ENCODE measurements at regions of chr9 and their contacts with region 1.

Region 1: DNA sequence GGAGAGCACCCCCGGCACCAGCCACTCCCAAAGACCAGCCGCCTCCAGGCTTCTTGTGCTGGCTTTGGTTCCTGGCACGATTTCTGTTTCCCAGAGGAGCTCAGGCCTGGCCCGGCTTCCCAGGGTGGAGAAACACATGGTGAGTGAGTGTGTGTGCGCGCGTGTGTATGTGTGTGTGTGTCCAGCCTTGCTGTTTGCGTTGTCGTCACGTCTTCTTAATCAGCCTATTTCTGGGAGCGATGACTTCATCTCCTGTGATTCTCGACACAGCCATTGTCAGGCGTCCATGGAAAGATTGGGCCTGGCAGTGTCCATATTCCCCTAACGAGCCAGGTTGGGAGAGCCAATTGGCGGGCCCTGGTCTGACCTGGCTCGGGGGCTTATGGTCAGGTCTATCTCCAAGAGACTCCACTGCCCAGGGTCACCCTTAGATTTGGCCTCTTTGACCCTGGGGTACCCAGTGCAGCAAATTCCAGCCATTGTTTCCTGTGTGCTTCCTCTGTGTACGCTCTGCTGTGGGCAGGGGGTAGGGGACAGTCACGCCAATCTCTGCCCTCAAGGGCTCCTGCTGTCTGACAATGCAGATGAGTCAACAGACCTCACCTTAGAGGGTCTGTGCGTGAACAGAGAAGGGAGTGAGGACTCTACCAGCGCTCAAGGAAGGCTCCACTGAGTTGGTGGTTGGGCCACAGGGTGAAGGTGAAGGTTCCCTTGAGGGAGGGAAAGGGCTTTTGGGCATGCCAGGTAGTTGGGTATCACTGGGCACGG is 73.8 kb downstream of the DAB2IP start:
- DNase-seq: peak; percentile 95 to 99
- ATAC-seq: peak; percentile 86 to 92 (median 88)
- H3K4me3 ChIP-seq: no peak overlapping the region
- H3K27ac ChIP-seq: peak overlapping the region; percentile 67 to 98 (median 92)
- H3K4me1 ChIP-seq: peaks cover 70 to 100% (median 98%) of the 10 kb centered on the region in 9 donors
- H3K27me3 ChIP-seq: no peaks in the 10 kb centered on the region
- CTCF ChIP-seq: no peak

Region 2: GRCh38 chr9:121640076-121640475 is 85.1 kb before region 1 on chr9:
- intact Hi-C with region 1: loop called in 1 of 10 experiments (anchors 10 kb)
- DNase-seq: peak; percentile 70 to 73
- ATAC-seq: peak; percentile 52 to 84 (median 74)
- H3K4me3 ChIP-seq: no peak overlapping the region
- H3K27ac ChIP-seq: peak overlapping the region in 9 of 10 donors; percentile 32 to 79 (median 47)
- H3K4me1 ChIP-seq: peaks cover 16 to 90% (median 61%) of the 10 kb centered on the region in 9 donors
- H3K27me3 ChIP-seq: no peaks in the 10 kb centered on the region
- CTCF ChIP-seq: peak; percentile 53 to 76 (median 68)

Region 3: DNA sequence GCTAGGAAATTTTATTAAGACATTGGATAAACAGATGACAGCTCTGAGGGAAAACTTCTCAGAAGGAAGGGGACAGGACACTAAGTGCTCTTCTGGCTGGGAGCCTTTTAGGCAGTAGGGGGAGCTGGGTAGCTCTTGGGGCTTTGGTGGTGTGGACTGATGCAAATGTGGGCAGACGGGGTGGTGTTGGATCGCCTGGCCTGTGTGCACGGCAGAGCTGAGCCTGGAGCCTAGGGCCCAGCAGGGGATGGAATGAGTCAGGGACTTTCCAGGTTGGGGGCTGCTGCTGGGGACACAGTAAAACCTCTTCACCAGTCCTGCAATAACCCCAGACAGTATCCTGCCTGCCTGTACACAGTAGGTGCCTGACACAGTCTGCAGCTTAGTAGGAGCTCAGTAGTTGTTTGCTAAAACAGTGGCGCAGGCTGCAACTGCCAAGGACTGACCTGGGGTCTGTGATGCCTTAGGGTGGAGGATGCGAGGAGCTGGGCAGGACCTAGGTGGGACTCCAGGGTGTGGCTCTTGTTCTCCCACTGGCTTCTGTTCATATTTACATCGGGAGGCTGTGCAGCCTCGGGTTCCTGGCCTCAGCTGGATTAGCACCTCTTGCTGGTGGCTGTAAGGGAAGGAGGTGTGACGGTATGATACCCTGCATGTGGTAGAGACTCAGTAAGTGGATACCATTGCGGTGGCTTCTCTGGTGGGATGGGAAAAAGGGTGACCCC is 10.0 kb after region 1 on chr9:
- intact Hi-C with region 1: loop called in 1 of 10 experiments (anchors 1 kb)
- DNase-seq: no peak
- ATAC-seq: peak in 5 of 8 donors; percentile 7 to 35 (median 11)
- H3K4me3 ChIP-seq: peak overlapping the region in 9 of 10 donors; percentile 37 to 61 (median 56)
- H3K27ac ChIP-seq: peak overlapping the region; percentile 77 to 98 (median 89)
- H3K4me1 ChIP-seq: peaks cover 54 to 97% (median 83%) of the 10 kb centered on the region in 9 donors
- H3K27me3 ChIP-seq: peaks cover 0 to 16% (median 0%) of the 10 kb centered on the region in 7 donors
- CTCF ChIP-seq: peak in 7 of 9 donors; percentile 29 to 57 (median 46)

Region 4: GRCh38 chr9:121744002-121744686 is 19.0 kb after region 1 on chr9:
- intact Hi-C with region 1: loop called in 1 of 10 experiments (anchors 2 kb)
- DNase-seq: peak; percentile 67 to 75
- ATAC-seq: peak; percentile 43 to 83 (median 73)
- H3K4me3 ChIP-seq: peak overlapping the region; percentile 23 to 64 (median 52)
- H3K27ac ChIP-seq: peak overlapping the region; percentile 89 to 98 (median 94)
- H3K4me1 ChIP-seq: peaks cover 57 to 100% (median 90%) of the 10 kb centered on the region in 9 donors
- H3K27me3 ChIP-seq: no peaks in the 10 kb centered on the region
- CTCF ChIP-seq: peak; percentile 29 to 77 (median 54)

Region 5: DNA sequence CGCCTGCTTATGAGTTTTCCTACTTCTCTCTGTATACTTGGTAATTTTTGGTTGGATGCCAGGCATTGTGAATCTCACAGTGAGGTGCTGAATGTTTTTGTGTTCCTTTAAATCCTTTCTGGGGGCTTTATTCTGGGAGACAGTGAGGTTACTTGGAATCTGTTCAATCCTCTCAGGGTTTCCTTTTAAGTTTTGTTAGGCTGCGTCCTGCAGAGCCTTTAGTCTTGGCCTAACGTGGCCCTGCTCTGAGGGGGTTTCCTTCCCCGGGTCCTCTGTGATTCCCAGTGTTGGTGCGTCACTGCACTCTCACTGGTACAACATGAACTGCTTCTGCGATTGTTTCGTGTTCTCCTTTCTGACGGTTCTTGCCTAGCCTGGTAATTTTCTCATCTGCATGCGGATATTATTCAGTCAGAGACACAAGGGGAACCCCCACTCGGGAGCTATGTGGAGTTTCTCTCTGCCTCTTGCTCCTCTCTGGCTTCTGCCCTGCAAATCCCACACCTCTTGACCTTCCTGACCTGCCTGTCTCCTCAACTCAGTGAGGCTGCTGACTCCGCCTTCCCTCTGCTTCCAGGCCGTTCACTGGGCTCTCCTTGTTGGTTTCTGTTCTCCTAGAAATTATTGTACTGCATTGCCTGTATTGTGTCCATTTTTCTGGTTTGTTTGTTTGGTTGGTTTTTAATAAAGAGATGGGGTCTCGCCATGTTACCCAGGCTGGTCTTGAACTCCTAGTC is 54.4 kb after region 1 on chr9:
- intact Hi-C with region 1: loop called in 1 of 10 experiments (anchors 1 kb)
- DNase-seq: peak in 1 of 2 donors; percentile 54
- ATAC-seq: peak; percentile 25 to 88 (median 78)
- H3K4me3 ChIP-seq: no peak overlapping the region
- H3K27ac ChIP-seq: peak overlapping the region; percentile 14 to 79 (median 70)
- H3K4me1 ChIP-seq: peaks cover 2 to 68% (median 32%) of the 10 kb centered on the region in 9 donors
- H3K27me3 ChIP-seq: no peaks in the 10 kb centered on the region
- CTCF ChIP-seq: no peak

Measured in heart right ventricle (tissue), 16 donors.